ENCODE measurements at regions of chr6 and their contacts with region 1.

Region 1: DNA sequence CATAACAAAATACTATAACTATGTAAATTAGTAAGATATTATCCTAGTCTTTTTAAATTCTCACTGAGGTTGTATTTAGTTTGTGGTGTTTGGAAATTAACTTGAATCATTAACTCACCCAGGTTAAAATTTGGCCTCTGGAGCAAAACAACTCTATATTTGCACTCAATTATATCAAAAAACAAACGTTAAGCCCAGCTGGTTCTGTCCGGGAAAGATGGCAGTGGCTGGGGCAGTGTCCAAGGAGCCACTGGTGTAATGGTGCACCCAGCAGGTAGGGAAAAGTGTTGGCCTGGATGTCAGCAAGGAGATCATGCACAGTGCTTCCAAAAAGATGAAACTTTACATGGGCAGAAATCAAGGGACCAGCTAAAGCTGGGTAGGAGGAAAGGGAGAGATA is 285.3 kb upstream of the CITED2 start:
- DNase-seq: no peak
- ATAC-seq: no peak
- H3K4me3 Mint-ChIP-seq: no peak overlapping the region
- H3K27ac Mint-ChIP-seq: no peak overlapping the region
- H3K4me1 Mint-ChIP-seq: no peaks in the 10 kb centered on the region
- H3K27me3 Mint-ChIP-seq: peaks cover 1% of the 10 kb centered on the region

Region 2: DNA sequence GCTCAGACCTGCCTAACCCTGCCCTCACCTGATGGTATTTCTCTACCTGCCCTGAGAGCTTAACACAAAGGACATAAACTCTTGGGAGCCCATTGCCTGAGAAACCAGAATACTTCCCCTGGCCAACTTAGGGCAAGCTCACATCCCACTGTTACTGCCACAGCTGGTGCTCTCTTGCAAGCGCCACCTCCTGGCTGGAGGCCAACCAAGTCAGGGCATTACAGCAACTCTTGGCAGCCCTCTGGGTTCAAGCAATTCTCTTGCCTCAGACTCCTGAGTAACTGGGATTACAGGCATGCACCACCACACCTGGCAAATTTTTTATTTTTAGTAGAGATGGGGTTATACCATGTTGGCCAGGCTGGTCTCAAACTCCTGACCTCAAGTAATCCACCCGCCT is 454.7 kb before region 1 on chr6:
- CTCF ChIA-PET with region 1: no interaction called
- POLR2A ChIA-PET with region 1: no interaction called
- intact Hi-C with region 1: no loop called
- DNase-seq: peak; percentile 43
- ATAC-seq: no peak
- H3K4me3 Mint-ChIP-seq: no peak overlapping the region
- H3K27ac Mint-ChIP-seq: no peak overlapping the region
- H3K4me1 Mint-ChIP-seq: peaks cover 4% of the 10 kb centered on the region
- H3K27me3 Mint-ChIP-seq: no peaks in the 10 kb centered on the region

Region 3: GRCh38 chr6:139643986-139644385 is 15.7 kb before region 1 on chr6:
- CTCF ChIA-PET with region 1: no interaction called
- POLR2A ChIA-PET with region 1: no interaction called
- intact Hi-C with region 1: loop called in 1 of 2 experiments (anchors 2 kb)
- DNase-seq: no peak
- ATAC-seq: no peak
- H3K4me3 Mint-ChIP-seq: no peak overlapping the region
- H3K27ac Mint-ChIP-seq: no peak overlapping the region
- H3K4me1 Mint-ChIP-seq: peaks cover 5% of the 10 kb centered on the region
- H3K27me3 Mint-ChIP-seq: peaks cover 3% of the 10 kb centered on the region